ENCODE measurements at regions of chr11 and their contacts with region 1.

Region 1: DNA sequence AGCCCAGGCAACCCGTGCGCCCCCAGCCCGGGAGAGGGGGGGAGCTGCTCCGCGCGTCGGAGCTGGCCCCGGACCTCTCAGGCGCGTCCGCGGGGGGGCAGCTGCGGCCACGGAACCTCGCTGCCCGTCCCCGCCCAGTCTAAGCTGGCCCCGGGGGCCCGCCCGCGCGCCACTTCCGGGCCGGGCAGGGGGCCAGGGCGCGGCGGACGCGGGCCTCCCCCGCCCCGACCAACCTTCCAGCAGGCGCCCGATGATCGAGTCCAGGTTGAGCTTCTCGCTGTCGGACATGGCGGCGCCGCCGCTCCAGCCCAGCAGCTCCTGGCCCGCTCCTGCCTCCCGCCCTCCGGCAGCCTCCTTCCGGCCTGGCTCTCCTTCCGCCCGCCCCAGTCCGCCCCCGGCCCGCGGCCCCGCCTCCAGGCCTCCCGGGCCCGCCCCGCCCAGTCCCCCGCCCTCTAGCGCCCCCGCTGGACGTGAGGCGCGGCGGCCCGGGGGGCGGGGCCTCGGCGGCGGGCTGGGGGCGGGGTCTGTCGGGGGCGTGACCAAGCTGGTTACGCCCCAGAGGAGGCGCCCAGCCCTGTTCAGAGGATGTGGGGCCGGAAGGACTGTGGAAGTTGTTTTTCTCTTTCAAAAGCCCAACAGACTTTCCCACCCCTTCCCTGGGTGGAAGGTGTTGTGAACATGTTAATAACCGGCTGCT is at the start of gene PPP1CA:
- DNase-seq: peak; percentile 87 to 99 (median 92)
- ATAC-seq: peak; percentile 93
- H3K4me3 ChIP-seq: peak within 1 kb of the TSS; percentile 98
- H3K4me3 Mint-ChIP-seq: peak within 1 kb of the TSS; percentile 90 to 100 (median 96)
- H3K27ac ChIP-seq: peak within 1 kb of the TSS; percentile 87
- H3K27ac Mint-ChIP-seq: peak within 1 kb of the TSS; percentile 81 to 97 (median 95)
- H3K4me1 ChIP-seq: peaks cover 55 to 63% of the 10 kb centered on the region in 2 donors
- H3K4me1 Mint-ChIP-seq: peaks cover 22 to 59% (median 52%) of the 10 kb centered on the region in 7 donors
- H3K27me3 ChIP-seq: no peaks in the 10 kb centered on the region
- H3K27me3 Mint-ChIP-seq: no peaks in the 10 kb centered on the region
- total RNA-seq, gene PPP1CA: 83.0 to 339 (median 122) TPM

Region 2: DNA sequence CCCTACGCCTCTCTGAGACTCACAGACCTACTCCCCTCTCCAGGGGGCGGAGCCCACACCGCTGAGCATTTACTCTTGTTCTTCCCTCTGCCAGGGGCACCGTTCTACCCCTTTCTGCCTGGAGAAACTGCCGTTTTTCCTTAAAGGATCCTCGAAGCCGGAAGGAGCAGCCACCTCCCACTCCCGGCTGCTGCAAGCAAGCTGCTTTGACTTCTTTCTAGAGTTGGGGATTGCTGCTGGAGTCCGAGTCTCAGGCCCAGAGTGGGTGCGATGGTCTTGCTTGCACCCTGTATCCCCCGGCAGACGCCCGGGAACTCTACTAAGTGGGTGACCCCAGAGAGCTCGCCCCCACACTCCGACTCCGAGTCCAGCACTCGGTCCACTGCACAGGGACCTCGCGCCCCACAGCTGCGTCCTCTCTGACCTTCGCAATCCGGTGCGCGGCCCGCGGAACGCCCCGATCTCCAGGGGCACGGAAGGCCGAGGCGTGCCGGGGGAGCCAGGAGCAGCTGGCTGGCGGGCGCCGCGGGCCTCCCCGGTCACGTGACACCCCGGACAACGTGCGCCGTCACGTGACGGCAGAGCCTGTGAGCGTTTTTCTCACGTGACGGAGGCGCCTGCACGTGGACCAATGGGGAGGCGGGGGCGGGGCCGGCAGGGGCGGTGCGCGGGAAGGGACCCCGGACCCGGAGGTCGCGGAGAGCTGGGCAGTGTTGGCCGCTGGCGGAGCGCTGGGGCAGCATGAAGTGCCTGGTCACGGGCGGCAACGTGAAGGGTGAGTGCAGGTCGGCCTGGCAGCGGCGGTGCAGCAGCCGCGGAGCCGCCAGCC is 10.1 kb before region 1 on chr11 and contains the start of gene RAD9A:
- CTCF ChIA-PET with region 1: interaction called, 5 read pairs
- POLR2A ChIA-PET with region 1: interaction called, 65 read pairs
- intact Hi-C with region 1: loop called (anchors 1 kb)
- DNase-seq: peak; percentile 80 to 94 (median 87)
- ATAC-seq: peak; percentile 90
- H3K4me3 ChIP-seq: peak within 1 kb of the TSS; percentile 49
- H3K4me3 Mint-ChIP-seq: peak within 1 kb of the TSS; percentile 84 to 95 (median 88)
- H3K27ac ChIP-seq: peak within 1 kb of the TSS; percentile 83
- H3K27ac Mint-ChIP-seq: peak within 1 kb of the TSS; percentile 47 to 92 (median 82)
- H3K4me1 ChIP-seq: peaks cover 15 to 16% of the 10 kb centered on the region in 2 donors
- H3K4me1 Mint-ChIP-seq: peaks cover 27 to 47% (median 34%) of the 10 kb centered on the region in 7 donors
- H3K27me3 ChIP-seq: no peaks in the 10 kb centered on the region
- H3K27me3 Mint-ChIP-seq: peaks cover 0 to 3% (median 0%) of the 10 kb centered on the region in 5 donors
- total RNA-seq, gene RAD9A: 25.6 to 48.0 (median 45.0) TPM

Region 3: GRCh38 chr11:67428052-67428914 is 26.6 kb after region 1 on chr11 and contains the start of gene RPS6KB2:
- CTCF ChIA-PET with region 1: interaction called, 6 read pairs
- POLR2A ChIA-PET with region 1: interaction called, 1,530 read pairs
- intact Hi-C with region 1: loop called (anchors 1 kb)
- DNase-seq: peak; percentile 95 to 100 (median 98)
- ATAC-seq: peak; percentile 97
- H3K4me3 ChIP-seq: peak within 1 kb of the TSS; percentile 82
- H3K4me3 Mint-ChIP-seq: peak within 1 kb of the TSS; percentile 92 to 100 (median 98)
- H3K27ac ChIP-seq: peak within 1 kb of the TSS; percentile 97
- H3K27ac Mint-ChIP-seq: peak within 1 kb of the TSS; percentile 94 to 98 (median 96)
- H3K4me1 ChIP-seq: peaks cover 19 to 38% of the 10 kb centered on the region in 2 donors
- H3K4me1 Mint-ChIP-seq: peaks cover 19 to 62% (median 43%) of the 10 kb centered on the region in 7 donors
- H3K27me3 ChIP-seq: no peaks in the 10 kb centered on the region
- H3K27me3 Mint-ChIP-seq: no peaks in the 10 kb centered on the region
- total RNA-seq, gene RPS6KB2: 61.9 to 83.9 (median 77.7) TPM

Region 4: GRCh38 chr11:67445515-67445914 is 43.9 kb after region 1 on chr11:
- CTCF ChIA-PET with region 1: interaction called, 37 read pairs
- POLR2A ChIA-PET with region 1: interaction called, 1,530 read pairs
- intact Hi-C with region 1: no loop called
- DNase-seq: no peak
- ATAC-seq: no peak
- H3K4me3 ChIP-seq: peak overlapping the region; percentile 49
- H3K4me3 Mint-ChIP-seq: peak overlapping the region; percentile 68 to 83 (median 80)
- H3K27ac ChIP-seq: peak overlapping the region; percentile 85
- H3K27ac Mint-ChIP-seq: peak overlapping the region; percentile 89 to 99 (median 96)
- H3K4me1 ChIP-seq: peaks cover 38 to 76% of the 10 kb centered on the region in 2 donors
- H3K4me1 Mint-ChIP-seq: peaks cover 52 to 93% (median 69%) of the 10 kb centered on the region in 7 donors
- H3K27me3 ChIP-seq: no peaks in the 10 kb centered on the region
- H3K27me3 Mint-ChIP-seq: no peaks in the 10 kb centered on the region

Region 5: GRCh38 chr11:67489203-67489884 is 87.7 kb after region 1 on chr11:
- CTCF ChIA-PET with region 1: interaction called, 3 read pairs
- POLR2A ChIA-PET with region 1: interaction called, 106 read pairs
- intact Hi-C with region 1: loop called in 1 of 2 experiments (anchors 1 kb)
- DNase-seq: no peak
- ATAC-seq: no peak
- H3K4me3 ChIP-seq: no peak overlapping the region
- H3K4me3 Mint-ChIP-seq: peak overlapping the region in 2 of 10 donors; percentile 15 to 70
- H3K27ac ChIP-seq: peak overlapping the region; percentile 61
- H3K27ac Mint-ChIP-seq: peak overlapping the region in 8 of 9 donors; percentile 38 to 85 (median 70)
- H3K4me1 ChIP-seq: peaks cover 28% of the 10 kb centered on the region in 2 donors
- H3K4me1 Mint-ChIP-seq: peaks cover 31 to 47% (median 43%) of the 10 kb centered on the region in 7 donors
- H3K27me3 ChIP-seq: no peaks in the 10 kb centered on the region
- H3K27me3 Mint-ChIP-seq: no peaks in the 10 kb centered on the region